ENCODE measurements at regions of chr2 and their contacts with region 1.

Region 1: DNA sequence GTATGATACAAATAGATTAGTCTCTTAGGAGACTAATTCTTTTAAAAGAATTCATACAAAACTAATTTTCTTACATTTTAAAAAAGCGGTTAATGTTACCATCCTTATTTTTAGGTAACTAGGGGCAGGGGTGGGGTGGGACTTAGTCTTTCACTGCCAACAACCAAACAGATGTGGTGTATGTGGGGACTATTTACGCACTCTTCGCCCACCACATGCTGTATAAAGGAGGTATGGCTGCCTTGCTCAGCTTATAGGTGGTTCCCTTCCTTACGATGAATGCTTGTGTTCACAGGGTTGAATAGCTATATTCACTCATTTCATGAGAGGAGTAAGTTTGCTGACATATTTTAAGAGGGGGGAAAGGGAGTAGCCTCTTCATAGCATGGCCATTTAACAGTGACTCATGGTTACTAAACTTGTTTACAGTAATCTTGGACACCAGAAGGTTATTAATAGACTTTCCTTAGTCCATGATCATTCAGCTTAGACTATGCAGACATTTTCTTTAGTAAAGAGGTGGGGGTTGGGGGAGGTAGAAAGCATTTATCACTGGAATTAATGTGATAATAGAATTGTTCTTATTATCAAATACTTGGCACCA is 61.8 kb downstream of the CAB39 start:
- DNase-seq: no peak
- H3K4me3 ChIP-seq: no peak overlapping the region
- H3K27ac ChIP-seq: peak overlapping the region; percentile 24 to 49
- H3K4me1 ChIP-seq: peaks cover 0 to 54% (median 8%) of the 10 kb centered on the region in 4 donors
- H3K27me3 ChIP-seq: no peaks in the 10 kb centered on the region
- CTCF ChIP-seq: no peak

Region 2: GRCh38 chr2:229775614-229776313 is 998.7 kb before region 1 on chr2:
- intact Hi-C with region 1: no loop called
- DNase-seq: no peak
- H3K4me3 ChIP-seq: no peak overlapping the region
- H3K27ac ChIP-seq: no peak overlapping the region
- H3K4me1 ChIP-seq: peaks cover 0 to 3% (median 1%) of the 10 kb centered on the region in 4 donors
- H3K27me3 ChIP-seq: no peaks in the 10 kb centered on the region
- CTCF ChIP-seq: no peak

Region 3: DNA sequence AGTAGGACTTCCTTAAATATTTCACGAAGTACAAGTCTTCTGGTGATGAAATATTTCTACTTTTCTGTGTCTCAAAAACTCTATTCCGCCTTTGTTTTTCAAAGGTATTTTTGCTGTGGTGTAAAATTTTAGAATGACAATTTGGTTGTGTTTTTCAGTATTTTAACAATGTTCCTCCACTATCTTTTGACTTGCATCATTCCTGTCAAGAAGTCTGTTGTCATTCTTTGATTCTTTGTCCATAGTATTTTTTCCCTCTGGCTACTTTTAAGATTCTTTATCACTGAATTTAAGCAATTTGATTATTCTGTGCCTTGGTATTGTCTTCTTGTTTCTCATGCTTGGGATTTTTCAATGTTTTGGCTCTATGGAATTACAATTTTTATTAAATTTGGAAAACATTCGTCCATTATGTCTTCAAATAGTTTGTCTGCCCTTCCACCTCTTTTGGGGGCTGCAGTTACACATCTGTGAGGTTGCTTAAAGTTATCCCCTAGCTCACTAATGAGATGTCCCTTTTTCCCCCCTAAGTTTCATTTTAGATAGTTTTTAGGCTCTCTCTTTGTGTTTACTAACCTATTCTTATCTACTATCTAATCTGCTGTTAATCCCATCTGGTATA is 14.2 kb after region 1 on chr2:
- intact Hi-C with region 1: loop called (anchors 2 kb)
- DNase-seq: no peak
- H3K4me3 ChIP-seq: no peak overlapping the region
- H3K27ac ChIP-seq: no peak overlapping the region
- H3K4me1 ChIP-seq: peaks cover 3 to 44% (median 22%) of the 10 kb centered on the region in 4 donors
- H3K27me3 ChIP-seq: no peaks in the 10 kb centered on the region
- CTCF ChIP-seq: no peak

Measured in tibial artery (tissue), 4 donors.